IMR-90 (cell line): ENCODE measurements at regions of chr6 and their contacts with region 1.

Region 1: DNA sequence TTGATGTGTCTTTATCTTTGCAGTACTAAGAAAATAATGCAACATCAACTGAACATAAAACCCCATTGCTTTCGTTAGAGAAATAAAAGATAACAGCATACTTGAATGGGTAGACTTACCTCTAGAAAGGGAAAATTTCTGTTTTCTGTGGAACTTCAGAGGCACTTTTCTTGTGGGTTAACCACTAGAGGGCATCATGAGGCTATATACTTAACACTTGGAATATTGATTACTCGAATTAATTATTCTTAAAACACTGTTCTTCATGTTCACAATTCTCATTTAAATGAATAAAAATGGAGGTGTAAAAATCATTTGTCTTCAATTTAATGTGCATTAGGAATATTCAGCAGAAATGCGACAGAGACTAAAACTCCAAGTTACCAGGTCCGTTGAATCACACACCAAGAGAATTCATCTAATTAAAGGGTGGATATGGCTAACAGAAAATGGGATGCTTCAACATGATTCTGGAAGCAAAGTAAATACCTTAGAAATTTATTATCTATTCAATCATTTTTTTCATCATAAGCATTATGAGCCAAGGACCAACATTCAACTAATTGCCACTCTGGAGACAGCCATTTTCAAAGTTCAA is 330.8 kb upstream of the PREP start:
- DNase-seq: peak; percentile 60
- ATAC-seq: peak; percentile 44; the same call in 1 of the 2 replicates
- H3K4me3 ChIP-seq: no peak overlapping the region
- H3K27ac ChIP-seq: no peak overlapping the region
- H3K4me1 ChIP-seq: no peaks in the 10 kb centered on the region
- H3K27me3 ChIP-seq: no peaks in the 10 kb centered on the region
- CTCF ChIP-seq: peak; percentile 65
- POLR2A ChIP-seq: no peak
- RAD21 ChIP-seq: peak; percentile 73

Region 2: DNA sequence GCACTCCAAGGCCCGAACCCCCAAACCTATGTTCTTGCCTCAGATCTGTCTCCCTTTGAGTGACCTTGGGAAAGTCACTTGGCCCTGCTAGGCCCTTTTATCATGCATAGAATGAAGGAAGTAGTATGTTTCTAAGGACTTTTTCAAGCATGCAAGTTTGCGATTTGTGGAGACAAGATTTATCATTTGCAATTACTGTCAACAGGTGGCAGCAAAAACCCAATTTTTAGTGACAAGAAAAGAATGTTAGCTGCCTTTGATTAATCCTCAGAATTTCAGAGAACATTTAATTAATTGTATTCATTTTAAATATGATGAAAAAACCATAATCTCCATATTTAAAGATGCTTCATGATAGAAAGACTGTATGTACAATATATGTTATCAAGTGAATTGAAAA is 302.4 kb before region 1 on chr6:
- CTCF ChIA-PET with region 1: no interaction called
- POLR2A ChIA-PET with region 1: no interaction called
- dilution Hi-C with region 1: no loop called
- in situ Hi-C with region 1: no loop called
- intact Hi-C with region 1: loop called (anchors 5 kb)
- DNase-seq: peak; percentile 68
- ATAC-seq: no peak
- H3K4me3 ChIP-seq: no peak overlapping the region
- H3K27ac ChIP-seq: no peak overlapping the region
- H3K4me1 ChIP-seq: peaks cover 23% of the 10 kb centered on the region
- H3K27me3 ChIP-seq: no peaks in the 10 kb centered on the region
- CTCF ChIP-seq: peak; percentile 70
- POLR2A ChIP-seq: no peak
- RAD21 ChIP-seq: peak; percentile 61

Region 3: DNA sequence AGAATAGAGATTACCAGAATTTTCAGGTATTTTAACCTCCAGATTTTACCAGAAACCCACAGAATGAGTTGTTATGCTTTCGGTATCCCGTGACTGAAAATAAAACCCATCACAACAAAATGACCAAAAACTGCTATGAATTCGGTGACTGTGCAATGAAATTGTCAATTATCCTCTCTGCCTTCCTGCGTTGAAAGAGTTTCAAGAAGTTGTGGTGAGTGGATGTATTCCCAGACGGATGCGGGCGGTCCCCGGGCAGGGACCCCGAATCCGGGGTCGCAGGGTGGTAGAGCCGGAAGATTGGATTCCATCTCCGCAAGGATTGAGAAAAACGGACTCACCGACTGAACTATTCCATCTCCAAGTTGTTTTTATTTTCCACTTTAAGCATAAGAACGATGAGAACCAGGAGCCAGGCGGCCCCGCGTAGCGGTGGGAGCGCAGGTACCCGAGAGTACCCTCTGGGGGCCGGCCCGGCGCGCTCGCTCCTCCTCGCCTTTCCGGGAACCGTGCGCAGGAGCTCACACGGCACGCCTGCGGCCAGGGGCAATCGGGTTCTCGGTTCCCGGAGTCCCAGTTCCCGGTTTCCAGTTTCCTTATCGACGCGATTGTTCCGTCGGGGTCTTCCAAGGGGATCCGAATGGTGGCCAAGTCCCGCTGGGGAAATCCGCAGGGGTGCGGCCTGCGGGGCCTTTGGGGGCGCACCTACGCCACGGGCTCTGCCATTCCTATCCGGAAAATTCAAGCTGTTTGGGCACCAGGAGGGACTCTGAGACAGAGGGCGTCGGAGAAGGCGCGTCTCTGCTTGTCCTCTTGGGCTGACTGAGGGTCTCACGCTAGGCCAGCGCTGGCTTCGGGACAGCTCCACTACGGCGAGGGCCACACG is 247.6 kb after region 1 on chr6:
- CTCF ChIA-PET with region 1: no interaction called
- POLR2A ChIA-PET with region 1: no interaction called
- dilution Hi-C with region 1: no loop called
- in situ Hi-C with region 1: loop called (anchors 10 kb)
- intact Hi-C with region 1: no loop called
- DNase-seq: no peak
- ATAC-seq: no peak
- H3K4me3 ChIP-seq: no peak overlapping the region
- H3K27ac ChIP-seq: no peak overlapping the region
- H3K4me1 ChIP-seq: peaks cover 2% of the 10 kb centered on the region; the same call in 1 of the 2 replicates
- H3K27me3 ChIP-seq: no peaks in the 10 kb centered on the region
- CTCF ChIP-seq: no peak
- POLR2A ChIP-seq: no peak
- RAD21 ChIP-seq: no peak

Region 4: DNA sequence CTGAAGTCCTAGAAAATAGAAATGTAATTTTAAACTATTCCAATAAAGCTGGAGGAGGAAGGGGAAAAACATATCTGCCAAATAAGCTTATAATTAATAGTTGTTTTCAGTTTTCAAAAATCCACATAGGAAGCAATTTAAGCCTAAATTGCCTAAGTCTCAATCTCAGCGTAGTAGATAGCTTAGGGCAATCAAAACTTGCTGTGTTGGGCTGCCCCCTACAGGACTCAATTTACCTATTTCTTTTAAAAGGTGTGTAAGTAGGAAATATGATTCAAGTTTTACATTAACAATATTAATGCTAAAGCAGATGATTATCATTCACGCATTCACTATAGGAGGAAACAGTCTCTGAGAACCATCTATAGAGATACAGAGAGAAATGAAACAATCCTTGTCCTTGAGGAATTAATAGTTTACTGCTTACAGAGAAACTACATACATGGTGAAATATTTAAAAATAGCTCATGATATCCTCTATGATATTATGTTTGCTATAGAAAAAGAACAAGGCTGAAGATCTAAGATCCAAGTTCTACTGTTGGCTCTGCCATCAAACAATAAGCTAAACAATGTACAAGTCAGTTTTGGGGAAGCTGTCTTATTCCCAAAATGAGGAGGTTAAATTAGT is 489.8 kb after region 1 on chr6:
- CTCF ChIA-PET with region 1: no interaction called
- POLR2A ChIA-PET with region 1: no interaction called
- dilution Hi-C with region 1: no loop called
- in situ Hi-C with region 1: loop called (anchors 10 kb)
- intact Hi-C with region 1: loop called (anchors 1 kb)
- DNase-seq: peak; percentile 79
- ATAC-seq: peak; percentile 68
- H3K4me3 ChIP-seq: no peak overlapping the region
- H3K27ac ChIP-seq: no peak overlapping the region
- H3K4me1 ChIP-seq: no peaks in the 10 kb centered on the region
- H3K27me3 ChIP-seq: no peaks in the 10 kb centered on the region
- CTCF ChIP-seq: peak; percentile 80
- POLR2A ChIP-seq: 0 out of 2 replicates have a peak, but pooled peaks have one; percentile 36
- RAD21 ChIP-seq: peak; percentile 93

Region 5: DNA sequence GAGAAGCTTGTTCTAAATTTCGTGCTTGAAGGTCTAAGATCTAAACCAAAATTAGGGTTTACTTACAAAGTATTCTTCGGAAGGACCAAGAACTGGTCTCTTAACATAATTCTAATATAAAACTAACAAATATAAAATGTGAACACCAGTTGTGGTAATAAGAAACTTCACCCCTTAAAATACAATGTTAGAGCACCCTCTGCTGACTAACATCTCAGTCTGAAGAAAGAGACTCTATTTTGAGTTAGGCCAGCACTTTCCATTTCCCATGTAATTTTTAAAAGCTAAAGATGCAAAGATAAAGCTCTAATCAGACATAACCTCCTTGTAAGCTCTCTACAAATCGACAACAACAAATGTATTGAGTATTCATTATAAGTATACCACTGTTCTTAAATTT is 567.3 kb after region 1 on chr6:
- CTCF ChIA-PET with region 1: no interaction called
- POLR2A ChIA-PET with region 1: no interaction called
- dilution Hi-C with region 1: no loop called
- in situ Hi-C with region 1: loop called (anchors 10 kb)
- intact Hi-C with region 1: loop called (anchors 5 kb)
- DNase-seq: peak; percentile 65
- ATAC-seq: peak; percentile 79
- H3K4me3 ChIP-seq: no peak overlapping the region
- H3K27ac ChIP-seq: no peak overlapping the region
- H3K4me1 ChIP-seq: no peaks in the 10 kb centered on the region
- H3K27me3 ChIP-seq: no peaks in the 10 kb centered on the region
- CTCF ChIP-seq: peak; percentile 69
- POLR2A ChIP-seq: no peak
- RAD21 ChIP-seq: peak; percentile 71